Dorsolateral prefrontal cortex (tissue), 120 donors: ENCODE measurements at regions of chr11 and their contacts with region 1.

Region 1: DNA sequence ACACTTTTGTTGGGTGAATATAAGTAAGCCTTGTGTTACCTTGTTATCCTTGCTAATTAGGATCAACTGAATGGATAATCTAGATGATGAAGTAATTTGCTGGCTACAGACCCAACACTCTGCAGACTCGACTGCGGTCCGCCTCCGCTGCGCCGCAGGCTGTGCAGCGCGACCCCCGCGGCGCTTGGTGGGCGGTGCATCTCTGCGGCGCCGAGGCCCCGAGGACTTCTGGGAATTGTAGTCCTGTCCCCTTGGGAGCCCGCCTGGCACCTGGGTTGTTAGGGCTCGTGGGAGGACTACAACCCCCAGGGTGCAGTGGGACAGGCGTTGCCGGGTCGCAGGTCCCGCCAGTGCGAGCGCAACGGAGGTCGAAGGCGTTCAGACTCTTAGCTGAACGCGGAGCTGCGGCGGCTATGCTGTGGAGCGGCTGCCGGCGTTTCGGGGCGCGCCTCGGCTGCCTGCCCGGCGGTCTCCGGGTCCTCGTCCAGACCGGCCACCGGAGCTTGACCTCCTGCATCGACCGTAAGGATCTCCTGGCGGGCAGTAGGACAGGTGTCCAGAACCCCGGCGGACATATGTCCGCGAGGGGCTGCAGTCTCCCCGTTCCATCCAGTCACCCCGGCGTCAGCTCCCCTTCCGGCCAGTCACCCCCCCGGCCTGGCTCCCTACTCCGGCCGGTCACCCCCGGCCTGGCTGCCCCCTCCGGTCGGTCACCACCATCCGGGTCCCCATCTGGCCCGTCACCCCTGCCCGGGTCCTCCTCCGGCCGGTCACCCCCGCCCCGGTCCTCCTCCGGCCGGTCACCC is at the starts of genes ACAD8 and THYN1:
- DNase-seq: peak; percentile 95 to 99 (median 98)
- H3K4me3 ChIP-seq: peak within 1 kb of the TSS; percentile 70 to 99 (median 95)
- H3K27ac ChIP-seq: peak within 1 kb of the TSS in 57 of 59 donors; percentile 7 to 92 (median 78)
- H3K27me3 ChIP-seq: no peaks in the 10 kb centered on the region
- CTCF ChIP-seq: peak in 50 of 56 donors; percentile 21 to 66 (median 48)
- total RNA-seq, gene ACAD8: 30.4 to 56.7 (median 43.4) TPM
- total RNA-seq, gene THYN1: 37.8 to 102 (median 75.3) TPM

Region 2: GRCh38 chr11:133934599-133935550 is 318.5 kb before region 1 on chr11:
- intact Hi-C with region 1: loop called in 1 of 2 experiments (anchors 10 kb)
- DNase-seq: peak; percentile 60 to 94 (median 86)
- H3K4me3 ChIP-seq: peak overlapping the region in 39 of 59 donors; percentile 1 to 51 (median 30)
- H3K27ac ChIP-seq: peak overlapping the region in 32 of 59 donors; percentile 1 to 90 (median 40)
- H3K27me3 ChIP-seq: no peaks in the 10 kb centered on the region
- CTCF ChIP-seq: peak in 18 of 56 donors; percentile 4 to 46 (median 27)

Region 3: GRCh38 chr11:134802121-134802520 is 548.7 kb after region 1 on chr11:
- intact Hi-C with region 1: no loop called
- DNase-seq: no peak
- H3K4me3 ChIP-seq: peak overlapping the region in 7 of 59 donors; percentile 1 to 31 (median 13)
- H3K27ac ChIP-seq: peak overlapping the region in 2 of 59 donors; percentile 19 to 61
- H3K27me3 ChIP-seq: peaks cover 0 to 52% (median 0%) of the 10 kb centered on the region in 45 donors
- CTCF ChIP-seq: no peak